CD4-positive, alpha-beta T cell (primary cell): ENCODE measurements at regions of chr3 and their contacts with region 1.

Region 1: DNA sequence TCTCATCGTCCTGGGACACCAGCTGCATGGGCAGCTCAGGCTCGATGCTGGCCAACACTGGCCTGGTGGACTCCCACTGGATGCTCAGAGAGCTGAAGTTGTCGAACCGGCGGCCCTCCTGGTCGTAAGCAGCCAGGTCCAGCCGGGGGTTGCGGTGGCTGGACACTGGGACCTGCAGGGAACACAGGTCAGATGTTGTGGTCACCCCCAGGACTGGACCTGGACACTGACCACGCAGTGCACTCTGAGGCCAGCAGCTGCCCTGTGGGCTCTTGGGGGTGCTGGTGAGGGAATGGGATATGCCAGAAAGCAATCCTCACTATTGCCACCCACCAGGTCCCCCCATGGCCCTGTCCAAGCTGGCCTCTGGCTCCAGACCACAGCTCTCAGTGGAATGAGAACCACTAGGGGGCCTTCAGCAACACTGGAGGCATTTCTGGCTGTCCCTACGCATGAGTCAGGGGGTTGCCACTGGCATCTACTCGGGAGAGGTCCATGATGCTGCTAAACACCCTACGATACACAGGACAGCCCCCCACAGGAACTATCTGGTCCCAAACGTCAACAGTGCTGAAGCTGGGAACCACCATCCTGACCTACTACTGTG is 66.1 kb downstream of the NUP210 start:
- DNase-seq: no peak
- ATAC-seq: no peak
- H3K4me3 ChIP-seq: no peak overlapping the region
- H3K4me3 Mint-ChIP-seq: no peak overlapping the region
- H3K27ac ChIP-seq: peak overlapping the region in 1 of 2 donors; percentile 22
- H3K27ac Mint-ChIP-seq: no peak overlapping the region
- H3K4me1 ChIP-seq: peaks cover 19% of the 10 kb centered on the region
- H3K4me1 Mint-ChIP-seq: peaks cover 28% of the 10 kb centered on the region
- H3K27me3 ChIP-seq: no peaks in the 10 kb centered on the region
- H3K27me3 Mint-ChIP-seq: no peaks in the 10 kb centered on the region
- CTCF ChIP-seq: no peak

Region 2: DNA sequence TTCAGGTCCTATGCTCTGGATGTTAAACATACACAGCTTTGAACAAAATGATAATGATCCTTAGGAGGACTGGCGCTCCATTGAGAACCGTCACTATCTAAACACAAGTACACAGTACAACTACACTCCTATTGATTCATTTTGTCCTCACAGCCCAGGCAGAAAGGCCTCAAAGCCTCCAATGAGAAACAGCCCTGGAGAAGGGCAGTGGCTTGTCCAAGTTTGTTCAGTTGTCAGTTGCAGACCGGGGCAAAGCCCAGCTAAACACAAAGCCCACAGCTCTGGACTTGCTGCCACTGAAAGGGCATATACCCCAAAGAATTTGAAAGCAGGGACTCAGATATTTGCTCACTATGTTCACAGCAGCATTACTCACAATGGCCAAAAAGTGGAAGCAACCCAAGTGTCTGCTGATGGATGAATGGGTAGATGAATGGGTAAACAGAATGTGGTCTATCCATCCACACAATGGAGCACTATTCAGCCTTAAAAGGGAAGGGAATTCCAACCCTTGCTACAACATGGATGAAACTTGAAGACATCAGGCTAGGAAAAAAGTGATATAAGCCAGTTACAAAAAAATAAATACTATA is 31.4 kb after region 1 on chr3:
- CTCF ChIA-PET with region 1: no interaction called
- POLR2A ChIA-PET with region 1: no interaction called
- intact Hi-C with region 1: loop called in 1 of 2 experiments (anchors 5 kb)
- DNase-seq: no peak
- ATAC-seq: no peak
- H3K4me3 ChIP-seq: no peak overlapping the region
- H3K4me3 Mint-ChIP-seq: no peak overlapping the region
- H3K27ac ChIP-seq: no peak overlapping the region
- H3K27ac Mint-ChIP-seq: peak overlapping the region; percentile 70
- H3K4me1 ChIP-seq: peaks cover 17% of the 10 kb centered on the region
- H3K4me1 Mint-ChIP-seq: peaks cover 29% of the 10 kb centered on the region
- H3K27me3 ChIP-seq: no peaks in the 10 kb centered on the region
- H3K27me3 Mint-ChIP-seq: no peaks in the 10 kb centered on the region
- CTCF ChIP-seq: no peak